Heart right ventricle (tissue), 16 donors: ENCODE measurements at regions of chr13 and their contacts with region 1.

Region 1: GRCh38 chr13:41668130-41668757 is 210.9 kb downstream of the RGCC start:
- DNase-seq: peak in 1 of 2 donors; percentile 74
- ATAC-seq: peak; percentile 91 to 98 (median 96)
- H3K4me3 ChIP-seq: no peak overlapping the region
- H3K27ac ChIP-seq: no peak overlapping the region
- H3K4me1 ChIP-seq: peaks cover 0 to 12% (median 4%) of the 10 kb centered on the region in 9 donors
- H3K27me3 ChIP-seq: no peaks in the 10 kb centered on the region
- CTCF ChIP-seq: peak; percentile 69 to 93 (median 83)

Region 2: GRCh38 chr13:41848435-41849255 is 180.4 kb after region 1 on chr13:
- intact Hi-C with region 1: loop called in 1 of 10 experiments (anchors 5 kb)
- DNase-seq: no peak
- ATAC-seq: peak in 6 of 8 donors; percentile 38 to 72 (median 62)
- H3K4me3 ChIP-seq: no peak overlapping the region
- H3K27ac ChIP-seq: peak overlapping the region in 6 of 10 donors; percentile 4 to 70 (median 36)
- H3K4me1 ChIP-seq: peaks cover 3 to 17% (median 8%) of the 10 kb centered on the region in 9 donors
- H3K27me3 ChIP-seq: no peaks in the 10 kb centered on the region
- CTCF ChIP-seq: peak in 4 of 9 donors; percentile 10 to 50 (median 42)